ENCODE measurements at regions of chr5 and their contacts with region 1.

Region 1: DNA sequence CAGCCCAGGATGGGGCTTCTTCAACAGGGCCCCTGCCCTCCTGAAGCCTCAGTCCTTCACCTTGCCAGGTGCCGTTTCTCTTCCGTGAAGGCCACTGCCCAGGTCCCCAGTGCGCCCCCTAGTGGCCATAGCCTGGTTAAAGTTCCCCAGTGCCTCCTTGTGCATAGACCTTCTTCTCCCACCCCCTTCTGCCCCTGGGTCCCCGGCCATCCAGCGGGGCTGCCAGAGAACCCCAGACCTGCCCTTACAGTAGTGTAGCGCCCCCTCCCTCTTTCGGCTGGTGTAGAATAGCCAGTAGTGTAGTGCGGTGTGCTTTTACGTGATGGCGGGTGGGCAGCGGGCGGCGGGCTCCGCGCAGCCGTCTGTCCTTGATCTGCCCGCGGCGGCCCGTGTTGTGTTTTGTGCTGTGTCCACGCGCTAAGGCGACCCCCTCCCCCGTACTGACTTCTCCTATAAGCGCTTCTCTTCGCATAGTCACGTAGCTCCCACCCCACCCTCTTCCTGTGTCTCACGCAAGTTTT is 23.6 kb downstream of the PCDHGC5 start:
- DNase-seq: peak; percentile 81
- H3K4me3 Mint-ChIP-seq: no peak overlapping the region
- H3K27ac Mint-ChIP-seq: peak overlapping the region; percentile 81
- H3K4me1 Mint-ChIP-seq: peaks cover 58% of the 10 kb centered on the region
- H3K27me3 Mint-ChIP-seq: no peaks in the 10 kb centered on the region
- CTCF ChIP-seq: peak; percentile 98

Region 2: GRCh38 chr5:141412854-141413539 is 99.5 kb before region 1 on chr5 and contains the start of gene PCDHGA10:
- CTCF ChIA-PET with region 1: interaction called, 18 read pairs
- POLR2A ChIA-PET with region 1: interaction called, 4 read pairs
- intact Hi-C with region 1: no loop called
- DNase-seq: peak; percentile 83
- H3K4me3 Mint-ChIP-seq: peak within 1 kb of the TSS; percentile 54
- H3K27ac Mint-ChIP-seq: no peak within 1 kb of the TSS
- H3K4me1 Mint-ChIP-seq: no peaks in the 10 kb centered on the region
- H3K27me3 Mint-ChIP-seq: no peaks in the 10 kb centered on the region
- CTCF ChIP-seq: peak; percentile 67
- total RNA-seq, gene PCDHGA10: 1.4 TPM in 2 replicates

Region 3: DNA sequence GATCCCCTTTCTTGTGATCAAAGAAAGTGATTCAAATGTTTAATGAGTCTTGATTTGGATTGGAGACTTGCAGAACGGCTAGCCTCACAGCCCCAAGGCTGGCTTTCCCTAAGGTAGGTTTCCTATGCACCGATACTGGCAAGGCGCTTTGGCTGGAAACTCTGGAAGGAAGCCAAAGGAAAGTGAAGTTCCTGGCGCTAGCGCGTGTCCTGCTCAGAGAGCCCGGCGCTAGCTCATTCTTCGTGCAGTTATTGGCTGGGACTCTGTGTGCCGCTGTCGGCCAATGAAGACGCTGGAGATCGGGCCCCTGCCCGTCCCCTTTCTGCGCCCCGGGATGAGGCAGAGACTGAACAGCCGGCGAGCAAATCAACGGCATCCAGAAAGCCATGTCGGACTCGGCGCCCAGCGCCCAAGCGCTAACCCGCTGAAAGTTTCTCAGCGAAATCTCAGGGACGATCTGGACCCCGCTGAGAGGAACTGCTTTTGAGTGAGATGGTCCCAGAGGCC is 36.8 kb before region 1 on chr5 and contains the start of gene PCDHGC3:
- CTCF ChIA-PET with region 1: interaction called, 42 read pairs
- POLR2A ChIA-PET with region 1: interaction called, 27 read pairs
- intact Hi-C with region 1: loop called (anchors 1 kb)
- DNase-seq: peak; percentile 98
- H3K4me3 Mint-ChIP-seq: peak within 1 kb of the TSS; percentile 94
- H3K27ac Mint-ChIP-seq: peak within 1 kb of the TSS; percentile 84
- H3K4me1 Mint-ChIP-seq: peaks cover 18% of the 10 kb centered on the region
- H3K27me3 Mint-ChIP-seq: no peaks in the 10 kb centered on the region
- CTCF ChIP-seq: peak; percentile 55
- total RNA-seq, gene PCDHGC3: 17.3 and 31.7 TPM in 2 replicates

Region 4: DNA sequence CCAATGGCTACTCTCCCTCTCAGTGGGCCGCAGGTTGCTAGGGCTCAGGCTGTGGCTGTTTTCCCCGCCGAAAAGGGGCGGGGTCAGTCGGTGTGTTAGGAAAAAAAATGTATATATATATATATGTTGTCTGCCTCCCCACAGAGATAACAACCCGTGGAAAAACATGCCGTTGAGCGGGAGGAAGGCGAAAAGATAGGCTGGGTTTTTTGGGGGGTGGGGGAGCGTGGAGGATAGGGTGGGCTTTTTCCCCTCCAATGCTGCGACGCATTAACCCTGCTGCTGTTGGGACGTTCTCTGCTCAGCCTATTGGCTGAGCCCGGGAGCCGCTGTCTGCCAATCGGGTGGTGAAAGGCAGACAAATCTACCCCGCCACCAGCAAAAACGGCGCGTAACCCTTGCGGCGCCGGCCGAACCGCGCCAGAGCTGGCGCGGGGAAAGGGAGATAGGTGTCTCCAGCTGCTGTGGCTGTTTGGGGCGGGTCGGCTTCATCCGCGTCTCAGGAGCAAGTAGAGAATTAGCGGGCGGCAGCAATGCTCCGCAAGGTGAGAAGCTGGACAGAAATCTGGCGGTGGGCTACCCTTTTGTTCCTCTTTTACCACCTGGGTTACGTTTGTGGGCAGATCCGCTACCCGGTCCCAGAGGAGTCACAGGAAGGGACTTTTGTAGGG is 27.7 kb before region 1 on chr5 and contains the start of gene PCDHGC4:
- CTCF ChIA-PET with region 1: interaction called, 26 read pairs
- POLR2A ChIA-PET with region 1: interaction called, 7 read pairs
- intact Hi-C with region 1: no loop called
- DNase-seq: no peak
- H3K4me3 Mint-ChIP-seq: no peak within 1 kb of the TSS
- H3K27ac Mint-ChIP-seq: no peak within 1 kb of the TSS
- H3K4me1 Mint-ChIP-seq: peaks cover 14% of the 10 kb centered on the region
- H3K27me3 Mint-ChIP-seq: no peaks in the 10 kb centered on the region
- CTCF ChIP-seq: no peak
- total RNA-seq, gene PCDHGC4: 0.40 and 1.7 TPM in 2 replicates

Region 5: DNA sequence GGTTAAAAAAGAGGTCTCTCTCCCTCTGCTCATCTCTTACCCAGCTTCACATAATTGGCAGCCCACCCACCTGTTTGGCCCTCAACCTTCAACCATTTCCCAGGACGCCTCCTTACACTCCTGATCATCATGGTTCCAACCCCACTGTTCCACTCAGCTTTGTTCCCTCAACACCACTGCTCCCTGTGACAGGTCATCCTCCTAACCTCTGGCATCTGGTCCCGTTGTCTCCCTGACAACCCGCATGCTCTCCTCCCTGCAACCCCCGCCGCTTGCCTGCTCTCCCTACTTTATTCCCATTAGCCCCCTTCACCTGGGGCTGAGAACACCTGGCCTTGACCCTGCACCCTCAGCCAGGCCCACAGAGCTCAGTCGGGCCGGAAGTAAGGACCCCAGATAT is 10.7 kb before region 1 on chr5:
- CTCF ChIA-PET with region 1: interaction called, 27 read pairs
- POLR2A ChIA-PET with region 1: no interaction called
- intact Hi-C with region 1: no loop called
- DNase-seq: no peak
- H3K4me3 Mint-ChIP-seq: no peak overlapping the region
- H3K27ac Mint-ChIP-seq: no peak overlapping the region
- H3K4me1 Mint-ChIP-seq: no peaks in the 10 kb centered on the region
- H3K27me3 Mint-ChIP-seq: no peaks in the 10 kb centered on the region
- CTCF ChIP-seq: no peak